ENCODE measurements at regions of chr17 and their contacts with region 1.

Region 1: GRCh38 chr17:35870906-35871819 is 2.5 kb upstream of the HEATR9 start:
- DNase-seq: peak in 3 of 5 donors; percentile 34 to 65 (median 41)
- H3K4me3 ChIP-seq: no peak overlapping the region
- H3K4me3 Mint-ChIP-seq: peak overlapping the region in 4 of 7 donors; percentile 7 to 71 (median 40)
- H3K27ac ChIP-seq: no peak overlapping the region
- H3K27ac Mint-ChIP-seq: peak overlapping the region; percentile 42 to 95 (median 76)
- H3K4me1 ChIP-seq: peaks cover 27% of the 10 kb centered on the region
- H3K4me1 Mint-ChIP-seq: peaks cover 59 to 82% (median 66%) of the 10 kb centered on the region in 3 donors
- H3K27me3 ChIP-seq: no peaks in the 10 kb centered on the region
- H3K27me3 Mint-ChIP-seq: no peaks in the 10 kb centered on the region

Region 2: GRCh38 chr17:35801583-35802224 is 69.5 kb before region 1 on chr17:
- CTCF ChIA-PET with region 1: no interaction called
- POLR2A ChIA-PET with region 1: no interaction called
- DNase-seq: peak in 1 of 5 donors; percentile 38
- H3K4me3 ChIP-seq: no peak overlapping the region
- H3K4me3 Mint-ChIP-seq: peak overlapping the region in 1 of 7 donors; percentile 6
- H3K27ac ChIP-seq: no peak overlapping the region
- H3K27ac Mint-ChIP-seq: no peak overlapping the region
- H3K4me1 ChIP-seq: peaks cover 11% of the 10 kb centered on the region
- H3K4me1 Mint-ChIP-seq: peaks cover 0 to 5% (median 5%) of the 10 kb centered on the region in 3 donors
- H3K27me3 ChIP-seq: peaks cover 10% of the 10 kb centered on the region
- H3K27me3 Mint-ChIP-seq: peaks cover 20 to 32% of the 10 kb centered on the region in 2 donors

Region 3: DNA sequence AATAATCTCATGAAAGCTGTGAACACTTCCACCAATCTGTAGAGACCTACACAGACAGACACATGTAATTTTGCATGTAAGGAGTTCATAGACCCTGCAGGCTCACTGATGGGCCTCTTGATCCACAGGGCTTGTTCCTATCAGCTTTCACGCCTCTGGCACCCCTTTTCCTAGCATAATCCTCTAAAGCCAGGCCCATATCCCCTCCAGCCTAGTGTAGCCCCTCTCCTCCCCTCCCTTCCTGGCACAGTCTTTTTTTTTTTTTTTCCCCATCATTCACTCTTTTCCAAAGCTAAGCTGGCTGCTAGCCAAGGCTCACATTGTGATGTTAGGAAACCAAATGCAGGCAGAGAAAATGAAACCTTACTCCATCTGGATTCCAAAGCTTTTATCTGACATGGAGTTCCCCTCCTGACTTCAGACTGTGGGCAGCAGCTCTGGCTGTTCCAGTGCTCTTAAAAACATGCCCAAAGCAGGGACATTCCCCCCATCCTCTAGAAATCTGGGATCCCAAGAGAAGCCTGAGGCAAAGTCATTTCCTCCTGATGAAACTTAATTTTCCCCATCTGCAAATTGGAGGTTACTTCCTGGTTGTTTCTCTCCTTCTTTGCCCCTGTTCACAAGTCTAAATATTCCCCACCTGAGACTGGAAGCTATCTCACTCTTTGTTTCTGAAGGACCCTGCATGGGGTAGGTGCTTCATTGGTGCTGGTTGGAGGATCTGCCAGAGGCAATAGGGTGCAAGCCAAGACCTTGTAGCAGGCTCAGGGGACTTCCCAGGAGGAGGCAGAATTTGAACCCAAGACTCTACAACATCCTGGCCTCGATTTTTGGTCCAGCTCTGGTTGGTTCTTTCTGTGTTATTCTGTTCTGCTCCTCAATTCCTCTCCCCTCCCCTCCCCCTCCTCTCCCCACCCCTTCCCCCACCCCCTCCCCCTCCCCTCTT is 18.9 kb after region 1 on chr17:
- CTCF ChIA-PET with region 1: interaction called, 144 read pairs
- POLR2A ChIA-PET with region 1: interaction called, 37 read pairs
- DNase-seq: peak in 2 of 5 donors; percentile 36 to 53
- H3K4me3 ChIP-seq: no peak overlapping the region
- H3K4me3 Mint-ChIP-seq: peak overlapping the region; percentile 52 to 88 (median 72)
- H3K27ac ChIP-seq: peak overlapping the region; percentile 20
- H3K27ac Mint-ChIP-seq: peak overlapping the region; percentile 74 to 98 (median 96)
- H3K4me1 ChIP-seq: peaks cover 54% of the 10 kb centered on the region
- H3K4me1 Mint-ChIP-seq: peaks cover 68 to 85% (median 78%) of the 10 kb centered on the region in 3 donors
- H3K27me3 ChIP-seq: no peaks in the 10 kb centered on the region
- H3K27me3 Mint-ChIP-seq: peaks cover 0 to 4% of the 10 kb centered on the region in 2 donors

Region 4: GRCh38 chr17:35898283-35899070 is 27.3 kb after region 1 on chr17:
- CTCF ChIA-PET with region 1: interaction called, 144 read pairs
- POLR2A ChIA-PET with region 1: interaction called, 15 read pairs
- DNase-seq: peak in 3 of 5 donors; percentile 22 to 83 (median 56)
- H3K4me3 ChIP-seq: no peak overlapping the region
- H3K4me3 Mint-ChIP-seq: peak overlapping the region; percentile 15 to 84 (median 72)
- H3K27ac ChIP-seq: no peak overlapping the region
- H3K27ac Mint-ChIP-seq: peak overlapping the region; percentile 82 to 97 (median 92)
- H3K4me1 ChIP-seq: peaks cover 74% of the 10 kb centered on the region
- H3K4me1 Mint-ChIP-seq: peaks cover 76 to 94% (median 92%) of the 10 kb centered on the region in 3 donors
- H3K27me3 ChIP-seq: no peaks in the 10 kb centered on the region
- H3K27me3 Mint-ChIP-seq: no peaks in the 10 kb centered on the region

Region 5: GRCh38 chr17:35906191-35906922 is 35.2 kb after region 1 on chr17:
- CTCF ChIA-PET with region 1: interaction called, 32 read pairs
- POLR2A ChIA-PET with region 1: interaction called, 15 read pairs
- DNase-seq: no peak
- H3K4me3 ChIP-seq: no peak overlapping the region
- H3K4me3 Mint-ChIP-seq: peak overlapping the region in 2 of 7 donors; percentile 9 to 43
- H3K27ac ChIP-seq: no peak overlapping the region
- H3K27ac Mint-ChIP-seq: peak overlapping the region in 4 of 8 donors; percentile 38 to 66 (median 63)
- H3K4me1 ChIP-seq: peaks cover 15% of the 10 kb centered on the region
- H3K4me1 Mint-ChIP-seq: peaks cover 62 to 94% (median 78%) of the 10 kb centered on the region in 3 donors
- H3K27me3 ChIP-seq: no peaks in the 10 kb centered on the region
- H3K27me3 Mint-ChIP-seq: no peaks in the 10 kb centered on the region

Region 6: GRCh38 chr17:35930211-35931065 is 59.3 kb after region 1 on chr17 and contains the start of gene RDM1:
- CTCF ChIA-PET with region 1: interaction called, 4 read pairs
- POLR2A ChIA-PET with region 1: interaction called, 10 read pairs
- DNase-seq: peak; percentile 67 to 89 (median 73)
- H3K4me3 ChIP-seq: peak within 1 kb of the TSS; percentile 74
- H3K4me3 Mint-ChIP-seq: peak within 1 kb of the TSS; percentile 85 to 93 (median 87)
- H3K27ac ChIP-seq: no peak within 1 kb of the TSS
- H3K27ac Mint-ChIP-seq: peak within 1 kb of the TSS; percentile 34 to 79 (median 66)
- H3K4me1 ChIP-seq: peaks cover 6% of the 10 kb centered on the region
- H3K4me1 Mint-ChIP-seq: peaks cover 22 to 35% (median 26%) of the 10 kb centered on the region in 3 donors
- H3K27me3 ChIP-seq: no peaks in the 10 kb centered on the region
- H3K27me3 Mint-ChIP-seq: no peaks in the 10 kb centered on the region
- total RNA-seq, gene RDM1: 2.5 to 3.1 TPM

Measured in CD8-positive, alpha-beta memory T cell (primary cell).